HepG2 (cell line): ENCODE measurements at regions of chr4 and their contacts with region 1.

Region 1: GRCh38 chr4:127965062-127965802 is at the starts of genes ABHD18 and MFSD8:
- DNase-seq: peak; percentile 97
- ATAC-seq: peak; percentile 93
- H3K4me3 ChIP-seq: peak within 1 kb of the TSS; percentile 84 to 99 (median 90)
- H3K27ac ChIP-seq: peak within 1 kb of the TSS; percentile 90
- H3K4me1 ChIP-seq: peaks cover 41% of the 10 kb centered on the region
- H3K27me3 ChIP-seq: no peaks in the 10 kb centered on the region; a peak in 1 of 5 replicates
- CTCF ChIP-seq: peak; percentile 63
- EP300 ChIP-seq: no peak
- POLR2A ChIP-seq: peak; percentile 81 to 86
- RAD21 ChIP-seq: peak; percentile 58
- total RNA-seq, gene ABHD18: 16.3 and 17.8 TPM in 2 replicates
- total RNA-seq, gene MFSD8: 12.3 and 25.5 TPM in 2 replicates

Region 2: DNA sequence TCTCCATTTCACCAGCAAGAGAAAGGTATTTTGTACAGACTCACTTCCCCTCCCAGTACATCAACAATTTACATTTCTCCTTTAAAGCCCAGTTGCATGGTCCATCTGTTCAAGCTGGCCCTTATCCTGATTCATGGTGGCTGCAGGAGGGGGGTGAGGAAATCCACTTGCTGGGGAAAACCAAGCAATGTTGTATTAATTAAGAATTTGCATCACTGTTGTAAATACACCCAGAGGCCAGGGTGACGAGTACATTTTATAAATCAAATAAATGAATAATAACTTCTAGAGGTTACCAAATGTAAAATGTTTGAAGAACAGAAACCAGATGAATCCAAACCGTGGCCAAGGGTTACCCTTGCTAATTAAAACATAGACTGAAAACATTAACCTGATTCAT is 728.3 kb before region 1 on chr4:
- CTCF ChIA-PET with region 1: no interaction called
- POLR2A ChIA-PET with region 1: no interaction called
- in situ Hi-C with region 1: no loop called
- intact Hi-C with region 1: no loop called
- DNase-seq: no peak
- ATAC-seq: no peak
- H3K4me3 ChIP-seq: no peak overlapping the region
- H3K27ac ChIP-seq: no peak overlapping the region
- H3K4me1 ChIP-seq: no peaks in the 10 kb centered on the region
- H3K27me3 ChIP-seq: no peaks in the 10 kb centered on the region
- CTCF ChIP-seq: no peak
- EP300 ChIP-seq: no peak
- POLR2A ChIP-seq: no peak
- RAD21 ChIP-seq: no peak

Region 3: GRCh38 chr4:127782274-127783025 is 182.8 kb before region 1 on chr4 and contains the start of gene HSPA4L:
- CTCF ChIA-PET with region 1: no interaction called
- POLR2A ChIA-PET with region 1: interaction called, 4 read pairs
- in situ Hi-C with region 1: no loop called
- intact Hi-C with region 1: loop called (anchors 10 kb)
- DNase-seq: peak; percentile 68
- ATAC-seq: peak; percentile 95
- H3K4me3 ChIP-seq: peak within 1 kb of the TSS; percentile 69 to 88 (median 82)
- H3K27ac ChIP-seq: peak within 1 kb of the TSS; percentile 69
- H3K4me1 ChIP-seq: peaks cover 27% of the 10 kb centered on the region
- H3K27me3 ChIP-seq: no peaks in the 10 kb centered on the region; a peak in 1 of 5 replicates
- CTCF ChIP-seq: peak; percentile 62
- EP300 ChIP-seq: no peak
- POLR2A ChIP-seq: peak; percentile 90 to 94
- RAD21 ChIP-seq: peak; percentile 41
- total RNA-seq, gene HSPA4L: 31.5 and 61.8 TPM in 2 replicates

Region 4: DNA sequence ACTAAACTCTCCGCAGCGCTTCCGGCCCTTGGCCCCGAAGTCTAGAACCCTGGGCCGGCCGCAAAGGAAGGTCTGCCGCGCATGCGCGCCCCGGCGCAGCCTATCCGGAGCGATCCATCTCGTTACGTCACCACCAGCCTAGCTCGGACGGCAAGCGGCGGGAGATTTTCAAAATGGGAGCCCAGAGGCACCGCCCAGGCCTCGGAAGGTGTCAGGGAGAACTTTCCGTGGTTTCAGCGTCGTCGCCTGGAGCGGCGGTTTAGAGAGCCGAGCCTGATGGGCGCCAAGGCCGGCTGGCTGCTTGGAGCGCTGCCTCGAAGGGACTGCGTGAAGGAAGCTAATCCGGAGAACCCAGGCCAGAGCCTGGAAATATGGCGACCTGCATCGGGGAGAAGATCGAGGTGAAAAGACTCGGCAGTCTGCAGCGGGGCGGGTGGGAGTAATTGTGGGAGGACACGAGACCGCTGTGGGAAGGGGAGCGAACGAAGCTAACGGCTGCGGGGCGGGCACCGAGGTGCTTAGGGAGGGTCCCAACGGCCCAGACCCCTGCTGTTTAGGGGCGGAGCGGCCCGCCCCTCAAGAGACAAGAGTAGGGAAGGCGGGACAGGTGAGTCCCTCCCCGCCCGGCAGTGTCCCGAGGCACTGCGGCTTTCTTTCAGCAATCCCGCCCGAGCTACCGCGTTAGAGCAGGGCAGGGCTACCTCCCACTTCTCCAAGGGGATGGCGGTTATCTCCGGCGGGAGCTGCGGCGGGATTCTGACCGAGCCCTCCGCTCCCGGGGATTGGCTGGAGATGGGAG is 84.3 kb before region 1 on chr4 and contains the start of gene PLK4:
- CTCF ChIA-PET with region 1: no interaction called
- POLR2A ChIA-PET with region 1: interaction called, 15 read pairs
- in situ Hi-C with region 1: no loop called
- intact Hi-C with region 1: loop called (anchors 2 kb)
- DNase-seq: peak; percentile 91
- ATAC-seq: peak; percentile 95
- H3K4me3 ChIP-seq: peak within 1 kb of the TSS; percentile 75 to 92 (median 90)
- H3K27ac ChIP-seq: peak within 1 kb of the TSS; percentile 86
- H3K4me1 ChIP-seq: peaks cover 22% of the 10 kb centered on the region
- H3K27me3 ChIP-seq: no peaks in the 10 kb centered on the region
- CTCF ChIP-seq: no peak
- EP300 ChIP-seq: no peak
- POLR2A ChIP-seq: peak; percentile 24 to 77
- RAD21 ChIP-seq: peak; percentile 12; the same call in 1 of the 2 replicates
- total RNA-seq, gene PLK4: 46.1 and 52.4 TPM in 2 replicates

Region 5: GRCh38 chr4:127888559-127888958 is 76.7 kb before region 1 on chr4:
- CTCF ChIA-PET with region 1: no interaction called
- POLR2A ChIA-PET with region 1: interaction called, 10 read pairs
- in situ Hi-C with region 1: no loop called
- intact Hi-C with region 1: no loop called
- DNase-seq: no peak
- ATAC-seq: no peak
- H3K4me3 ChIP-seq: no peak overlapping the region
- H3K27ac ChIP-seq: no peak overlapping the region
- H3K4me1 ChIP-seq: peaks cover 8% of the 10 kb centered on the region; the same call in 1 of the 2 replicates
- H3K27me3 ChIP-seq: no peaks in the 10 kb centered on the region
- CTCF ChIP-seq: no peak
- EP300 ChIP-seq: no peak
- POLR2A ChIP-seq: no peak
- RAD21 ChIP-seq: no peak

Region 6: DNA sequence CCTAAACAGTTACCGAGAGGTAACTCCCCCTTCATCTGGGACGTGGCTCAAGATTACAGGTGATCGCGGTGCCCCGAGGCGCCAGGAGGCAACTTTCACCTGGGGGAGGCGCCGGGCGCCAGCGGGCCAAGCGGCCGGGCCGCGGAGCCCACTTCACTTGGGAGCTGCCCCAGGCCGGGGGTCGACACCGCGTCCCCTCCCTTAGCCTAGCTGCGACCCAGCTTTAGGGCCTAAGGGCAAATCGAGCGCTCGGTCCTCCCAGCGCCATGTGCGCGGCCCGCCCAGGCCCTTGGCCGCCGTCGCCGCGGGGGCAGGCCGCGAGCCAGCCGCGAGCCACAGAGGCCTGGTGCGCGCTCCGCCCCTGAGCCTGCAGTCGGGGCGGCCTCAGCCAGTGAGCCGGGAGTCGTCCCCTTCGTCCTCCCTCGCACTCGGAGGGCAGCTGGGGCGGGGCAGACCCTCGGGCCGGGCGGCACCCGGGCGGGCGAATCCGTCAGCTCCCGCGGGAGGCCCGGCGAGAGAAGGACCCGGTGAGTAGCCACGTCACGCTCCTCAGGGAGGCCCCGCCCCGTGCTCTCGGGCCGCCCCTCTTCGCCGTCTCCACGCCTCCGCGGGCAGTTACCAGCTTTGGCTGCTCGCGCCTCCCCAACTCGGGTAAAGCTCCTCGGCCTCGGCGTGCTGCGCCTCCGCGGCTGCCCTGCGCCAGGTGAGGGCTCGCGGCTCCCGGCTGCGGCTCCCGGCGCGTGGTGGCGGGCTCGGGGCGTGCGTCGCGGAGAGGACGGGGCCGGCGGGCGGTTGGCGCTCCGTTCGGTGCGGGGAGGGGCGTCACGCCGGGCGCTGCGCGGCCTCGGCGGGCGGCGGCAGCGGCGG is 95.7 kb after region 1 on chr4 and contains the start of gene LARP1B:
- CTCF ChIA-PET with region 1: no interaction called
- POLR2A ChIA-PET with region 1: interaction called, 52 read pairs
- in situ Hi-C with region 1: loop called (anchors 10 kb)
- intact Hi-C with region 1: loop called (anchors 1 kb)
- DNase-seq: peak; percentile 91
- ATAC-seq: peak; percentile 92
- H3K4me3 ChIP-seq: peak within 1 kb of the TSS; percentile 71 to 94 (median 91)
- H3K27ac ChIP-seq: peak within 1 kb of the TSS; percentile 99
- H3K4me1 ChIP-seq: peaks cover 40% of the 10 kb centered on the region
- H3K27me3 ChIP-seq: no peaks in the 10 kb centered on the region
- CTCF ChIP-seq: peak; percentile 16; the same call in 1 of the 2 replicates
- EP300 ChIP-seq: no peak
- POLR2A ChIP-seq: peak; percentile 92 to 94
- RAD21 ChIP-seq: peak; percentile 77; the same call in 1 of the 2 replicates
- total RNA-seq, gene LARP1B: 52.7 and 57.1 TPM in 2 replicates

Region 7: GRCh38 chr4:128287871-128288688 is 322.8 kb after region 1 on chr4:
- CTCF ChIA-PET with region 1: no interaction called
- POLR2A ChIA-PET with region 1: interaction called, 4 read pairs
- in situ Hi-C with region 1: no loop called
- intact Hi-C with region 1: loop called (anchors 10 kb)
- DNase-seq: peak; percentile 96
- ATAC-seq: peak; percentile 85
- H3K4me3 ChIP-seq: peak overlapping the region; percentile 94 to 98 (median 95)
- H3K27ac ChIP-seq: peak overlapping the region; percentile 77
- H3K4me1 ChIP-seq: peaks cover 34% of the 10 kb centered on the region
- H3K27me3 ChIP-seq: peaks cover 2 to 5% of the 10 kb centered on the region in 2 experiments; a peak in 3 of 5 replicates
- CTCF ChIP-seq: peak; percentile 51
- EP300 ChIP-seq: peak in 1 of 2 experiments; percentile 37; a peak in 1 of 4 replicates
- POLR2A ChIP-seq: peak; percentile 53 to 88; a peak in 2 of 4 replicates
- RAD21 ChIP-seq: peak; percentile 66